ENCODE measurements at regions of chr16 and their contacts with region 1.

Region 1: DNA sequence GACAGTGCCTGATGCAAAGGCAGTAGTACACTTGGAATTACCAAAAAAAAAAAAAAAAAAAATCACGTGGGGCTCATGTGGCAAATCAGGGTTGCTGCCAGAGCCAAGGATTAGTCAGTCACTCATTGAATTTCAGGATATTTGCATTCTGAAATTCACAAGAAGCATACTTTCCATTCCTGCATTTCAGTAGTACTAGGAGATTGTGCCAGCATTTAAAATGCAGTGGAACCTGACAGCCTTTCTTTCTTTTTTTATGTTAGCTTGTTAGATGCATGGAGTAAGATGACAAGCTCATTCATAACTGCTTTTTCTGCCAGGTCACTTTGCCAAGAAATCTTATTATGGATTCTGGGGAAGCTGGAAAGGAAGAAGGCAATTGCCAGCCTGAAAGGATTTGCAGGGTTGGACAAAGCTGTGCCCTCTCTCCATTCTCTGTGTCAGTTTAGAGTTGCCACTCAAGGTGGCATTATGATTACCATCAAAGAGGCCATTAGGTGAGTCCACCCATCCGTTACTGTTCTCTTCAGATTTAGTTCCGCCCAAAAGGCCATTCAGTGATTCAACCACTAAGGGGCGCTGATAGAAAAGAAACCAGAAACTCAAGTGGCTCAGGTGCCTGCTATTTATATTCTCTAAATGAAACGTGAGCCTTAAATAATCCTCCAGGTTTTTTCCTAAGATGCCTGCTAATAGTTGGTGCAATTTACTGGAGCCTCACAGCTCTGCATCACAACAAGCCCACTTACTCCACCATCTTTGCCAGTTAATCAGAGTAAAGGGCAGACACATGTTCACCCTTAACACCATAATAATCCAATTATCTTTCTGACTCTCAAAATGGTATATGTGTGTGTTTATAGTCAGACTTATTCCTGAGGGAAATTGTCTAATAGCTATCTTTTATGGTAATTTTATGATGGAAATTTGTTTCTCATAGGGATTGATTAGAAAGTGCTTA is 59.0 kb downstream of the TANGO6 start:
- DNase-seq: peak; percentile 35
- H3K4me3 Mint-ChIP-seq: no peak overlapping the region
- H3K27ac Mint-ChIP-seq: no peak overlapping the region
- H3K4me1 Mint-ChIP-seq: no peaks in the 10 kb centered on the region
- H3K27me3 Mint-ChIP-seq: no peaks in the 10 kb centered on the region

Region 2: GRCh38 chr16:69105489-69106361 is 203.4 kb after region 1 on chr16 and contains the start of gene HAS3:
- CTCF ChIA-PET with region 1: no interaction called
- intact Hi-C with region 1: loop called (anchors 5 kb)
- DNase-seq: peak; percentile 60
- H3K4me3 Mint-ChIP-seq: peak within 1 kb of the TSS; percentile 79
- H3K27ac Mint-ChIP-seq: peak within 1 kb of the TSS; percentile 26
- H3K4me1 Mint-ChIP-seq: peaks cover 21% of the 10 kb centered on the region
- H3K27me3 Mint-ChIP-seq: peaks cover 26% of the 10 kb centered on the region
- total RNA-seq, gene HAS3: 0.20 to 0.31 TPM

Region 3: DNA sequence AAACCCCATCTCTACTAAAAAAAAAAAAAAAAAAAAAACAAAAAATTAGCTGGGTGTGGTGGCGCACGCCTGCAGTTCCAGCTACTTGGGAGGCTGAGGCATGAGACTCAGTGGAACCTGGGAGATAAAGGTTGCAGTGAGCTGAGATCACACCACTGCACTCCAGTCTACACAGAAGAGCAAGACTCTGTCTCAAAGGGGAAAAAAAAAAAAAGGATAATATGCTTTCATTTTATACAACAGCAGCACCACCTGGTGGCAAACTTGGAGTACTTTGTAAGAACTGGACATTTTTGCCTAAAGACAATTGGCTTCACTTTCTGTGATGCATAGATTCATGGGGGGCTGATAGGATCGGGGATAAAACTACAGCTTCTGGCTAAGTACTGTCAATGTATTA is 221.6 kb after region 1 on chr16:
- CTCF ChIA-PET with region 1: no interaction called
- intact Hi-C with region 1: loop called (anchors 5 kb)
- DNase-seq: peak; percentile 74
- H3K4me3 Mint-ChIP-seq: no peak overlapping the region
- H3K27ac Mint-ChIP-seq: no peak overlapping the region
- H3K4me1 Mint-ChIP-seq: peaks cover 18% of the 10 kb centered on the region
- H3K27me3 Mint-ChIP-seq: no peaks in the 10 kb centered on the region

Region 4: DNA sequence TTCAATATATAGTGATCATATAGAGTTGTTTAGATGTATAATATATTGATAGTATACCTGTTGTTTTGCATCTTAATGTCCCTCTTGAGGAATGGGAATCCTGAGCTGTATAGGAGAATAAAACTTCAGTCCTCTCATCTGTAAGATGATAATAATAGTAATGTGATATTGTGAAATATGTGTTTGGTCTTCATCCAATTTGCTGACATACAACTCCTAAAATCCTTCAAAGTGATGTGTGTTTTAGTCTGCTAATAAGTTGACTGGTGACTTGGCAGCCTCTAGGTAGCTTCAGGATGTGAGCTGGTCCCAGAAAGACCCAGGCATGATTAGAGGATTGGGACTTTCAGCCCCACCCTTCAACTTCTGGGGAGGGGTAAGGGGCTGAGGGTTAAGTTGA is 640.7 kb after region 1 on chr16:
- CTCF ChIA-PET with region 1: no interaction called
- intact Hi-C with region 1: no loop called
- DNase-seq: no peak
- H3K4me3 Mint-ChIP-seq: no peak overlapping the region
- H3K27ac Mint-ChIP-seq: no peak overlapping the region
- H3K4me1 Mint-ChIP-seq: no peaks in the 10 kb centered on the region
- H3K27me3 Mint-ChIP-seq: no peaks in the 10 kb centered on the region

Measured in activated naive CD4-positive, alpha-beta T cell treated with anti-CD3 and anti-CD28 coated beads for 36 hours (primary cell).